A549 (cell line): ENCODE measurements at regions of chr1 and their contacts with region 1.

Region 1: DNA sequence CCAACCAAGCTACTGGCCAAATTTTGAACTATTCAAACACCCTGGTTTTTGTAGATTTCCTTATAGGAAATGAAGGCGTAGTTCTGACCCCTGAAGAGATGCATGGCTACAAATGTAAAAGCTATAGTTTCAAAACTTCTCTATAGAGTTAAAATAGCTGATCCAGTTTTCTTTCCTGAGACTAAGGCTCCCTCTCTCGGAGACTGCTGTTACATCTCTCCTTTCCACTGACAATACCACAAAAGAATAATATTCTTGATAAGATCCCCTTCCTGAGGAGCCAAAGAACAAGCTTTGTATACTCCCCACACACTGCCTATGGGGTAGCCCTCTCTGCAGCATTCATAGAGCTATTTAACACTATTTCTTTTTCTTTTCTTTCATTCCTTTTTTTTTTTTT is 6.7 kb upstream of the CFAP126 start:
- DNase-seq: peak; percentile 23 to 29
- ATAC-seq: peak; percentile 66 to 85; a peak in 5 of 6 replicates
- H3K4me3 ChIP-seq: no peak overlapping the region
- H3K27ac ChIP-seq: no peak overlapping the region
- H3K4me1 ChIP-seq: peaks cover 9% of the 10 kb centered on the region; the same call in 2 of the 3 replicates
- CTCF ChIP-seq: peak; percentile 35; the same call in 2 of the 3 replicates
- EP300 ChIP-seq: no peak
- POLR2A ChIP-seq: no peak
- RAD21 ChIP-seq: peak; percentile 59 to 69; a peak in 4 of 5 replicates

Region 2: GRCh38 chr1:161209790-161210409 is 164.5 kb before region 1 on chr1:
- CTCF ChIA-PET with region 1: interaction called, 268 read pairs
- POLR2A ChIA-PET with region 1: no interaction called
- DNase-seq: peak; percentile 77 to 90
- ATAC-seq: peak; percentile 95 to 98
- H3K4me3 ChIP-seq: no peak overlapping the region
- H3K27ac ChIP-seq: no peak overlapping the region
- H3K4me1 ChIP-seq: 0 out of 3 replicates have a peak, but pooled peaks cover 3% of the 10 kb centered on the region
- CTCF ChIP-seq: peak; percentile 83
- EP300 ChIP-seq: no peak
- POLR2A ChIP-seq: no peak
- RAD21 ChIP-seq: peak; percentile 78 to 79